MCF 10A (cell line): ENCODE measurements at regions of chr20 and their contacts with region 1.

Region 1: DNA sequence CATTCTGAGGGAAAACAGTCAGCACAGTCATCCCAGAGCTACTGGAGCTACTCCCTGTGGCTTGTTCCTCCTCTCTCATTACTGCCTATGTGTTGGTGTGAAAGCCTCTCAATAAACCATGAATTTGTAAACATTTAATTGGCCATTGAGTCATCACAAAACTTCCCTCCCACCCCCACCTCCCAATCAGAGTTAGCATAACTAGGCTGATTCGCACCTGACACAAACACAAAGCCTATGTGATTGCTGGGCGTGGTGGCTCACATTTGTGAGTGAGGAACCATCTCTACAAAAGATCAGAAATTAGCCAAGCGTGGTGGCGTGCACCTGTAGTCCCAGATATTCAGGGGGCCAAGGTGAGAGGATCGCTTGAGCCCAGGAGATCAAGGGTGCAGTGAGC is 17.1 kb upstream of the SNTA1 start:
- DNase-seq: no peak
- H3K4me3 Mint-ChIP-seq: no peak overlapping the region
- H3K27ac Mint-ChIP-seq: no peak overlapping the region
- H3K4me1 Mint-ChIP-seq: no peaks in the 10 kb centered on the region
- H3K27me3 Mint-ChIP-seq: no peaks in the 10 kb centered on the region
- CTCF ChIP-seq: no peak

Region 2: DNA sequence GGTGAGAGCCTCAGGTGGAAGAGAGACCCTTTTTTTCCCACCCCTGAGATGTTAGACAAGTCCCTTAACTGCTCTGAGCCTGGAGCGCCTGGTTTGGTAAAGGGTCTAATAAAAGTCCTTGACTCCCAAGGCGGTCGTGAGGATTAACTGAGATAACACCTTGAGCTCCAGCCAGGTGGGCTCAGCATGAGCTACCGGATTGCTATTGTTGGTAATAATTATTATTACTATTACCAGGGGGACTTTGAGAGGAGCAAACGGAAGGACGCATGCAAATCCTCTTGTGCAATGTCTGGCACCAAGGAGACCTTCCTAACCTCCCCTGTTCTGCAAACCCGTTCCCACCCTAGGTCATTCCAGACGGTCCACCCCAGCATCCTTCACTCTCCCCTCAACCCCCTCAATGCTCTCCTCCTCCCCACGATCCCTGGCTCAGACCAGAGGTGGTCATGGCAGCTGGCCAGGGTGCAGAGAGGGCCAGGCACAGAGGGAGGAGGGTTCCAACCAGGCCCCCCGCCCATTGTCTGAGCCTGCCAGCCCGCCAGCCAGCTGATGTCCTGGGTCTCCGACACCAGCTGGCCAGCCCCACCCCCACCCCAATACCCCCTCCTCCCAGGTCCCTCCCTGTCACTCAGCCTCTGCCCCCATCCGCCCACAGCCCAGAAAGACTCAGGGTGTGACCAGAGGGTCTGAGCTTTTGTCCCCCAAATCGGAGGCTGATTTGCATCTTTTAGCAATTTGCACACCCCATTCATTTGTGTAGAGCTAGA is 14.9 kb after region 1 on chr20:
- CTCF ChIA-PET with region 1: interaction called, 10 read pairs
- POLR2A ChIA-PET with region 1: no interaction called
- intact Hi-C with region 1: no loop called
- DNase-seq: no peak
- H3K4me3 Mint-ChIP-seq: no peak overlapping the region
- H3K27ac Mint-ChIP-seq: no peak overlapping the region
- H3K4me1 Mint-ChIP-seq: no peaks in the 10 kb centered on the region
- H3K27me3 Mint-ChIP-seq: no peaks in the 10 kb centered on the region
- CTCF ChIP-seq: no peak

Region 3: DNA sequence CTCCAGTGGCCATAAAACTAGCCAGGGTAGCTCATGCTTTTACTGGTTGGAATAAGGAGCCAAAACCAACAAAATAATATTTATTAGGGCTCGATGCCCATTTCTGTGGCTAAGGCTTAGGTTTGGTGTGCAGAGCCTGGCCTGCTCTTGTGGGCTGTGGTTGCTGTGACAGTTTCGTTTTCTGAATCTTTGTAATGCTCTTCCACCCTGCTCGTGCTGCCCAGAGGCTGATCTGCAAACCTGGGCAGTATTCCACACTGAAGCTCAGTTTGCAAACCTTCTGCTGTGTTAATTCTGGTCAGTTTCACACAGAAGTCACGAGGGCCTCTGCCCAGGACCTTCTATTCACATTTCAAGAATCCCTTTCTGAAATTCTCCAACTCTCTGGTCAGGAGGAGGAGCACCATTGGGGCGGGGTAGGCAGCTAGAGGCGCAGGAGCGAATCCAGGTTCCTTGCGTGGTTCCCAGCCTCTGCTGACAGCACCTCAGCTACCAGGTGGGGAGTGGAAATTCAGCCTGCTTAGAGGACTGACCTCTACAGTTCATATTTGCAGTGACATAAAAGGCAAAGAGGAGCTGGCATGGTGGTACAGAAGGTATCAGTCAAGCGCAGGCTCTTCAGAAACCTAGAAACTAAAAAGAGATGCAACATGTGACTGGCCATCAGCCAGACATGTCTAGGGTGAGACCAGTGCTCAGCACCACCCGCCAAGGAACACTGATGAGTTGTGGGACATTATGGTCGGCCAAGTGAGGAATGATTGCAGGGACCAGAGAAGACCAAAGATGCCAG is 187.1 kb after region 1 on chr20:
- CTCF ChIA-PET with region 1: interaction called, 15 read pairs
- POLR2A ChIA-PET with region 1: no interaction called
- intact Hi-C with region 1: no loop called
- DNase-seq: peak; percentile 51
- H3K4me3 Mint-ChIP-seq: peak overlapping the region; percentile 63
- H3K27ac Mint-ChIP-seq: peak overlapping the region; percentile 49
- H3K4me1 Mint-ChIP-seq: peaks cover 10% of the 10 kb centered on the region
- H3K27me3 Mint-ChIP-seq: no peaks in the 10 kb centered on the region
- CTCF ChIP-seq: no peak

Region 4: GRCh38 chr20:33753763-33754162 is 293.1 kb after region 1 on chr20:
- CTCF ChIA-PET with region 1: no interaction called
- POLR2A ChIA-PET with region 1: no interaction called
- intact Hi-C with region 1: no loop called
- DNase-seq: peak; percentile 35
- H3K4me3 Mint-ChIP-seq: no peak overlapping the region
- H3K27ac Mint-ChIP-seq: no peak overlapping the region
- H3K4me1 Mint-ChIP-seq: no peaks in the 10 kb centered on the region
- H3K27me3 Mint-ChIP-seq: no peaks in the 10 kb centered on the region
- CTCF ChIP-seq: no peak

Region 5: GRCh38 chr20:33862709-33863403 is 402.1 kb after region 1 on chr20:
- CTCF ChIA-PET with region 1: no interaction called
- POLR2A ChIA-PET with region 1: no interaction called
- intact Hi-C with region 1: no loop called
- DNase-seq: peak; percentile 33
- H3K4me3 Mint-ChIP-seq: no peak overlapping the region
- H3K27ac Mint-ChIP-seq: no peak overlapping the region
- H3K4me1 Mint-ChIP-seq: no peaks in the 10 kb centered on the region
- H3K27me3 Mint-ChIP-seq: peaks cover 20% of the 10 kb centered on the region
- CTCF ChIP-seq: peak; percentile 42